Aorta (tissue), 5 donors: ENCODE measurements at regions of chr6 and their contacts with region 1.

Region 1: GRCh38 chr6:71420693-71421328 is 132.2 kb downstream of the OGFRL1 start:
- DNase-seq: peak; percentile 97 to 98
- ATAC-seq: peak; percentile 99
- H3K4me3 ChIP-seq: peak overlapping the region; percentile 91
- H3K27ac ChIP-seq: peak overlapping the region; percentile 73 to 87
- H3K4me1 ChIP-seq: peaks cover 3 to 11% of the 10 kb centered on the region in 2 donors
- H3K27me3 ChIP-seq: no peaks in the 10 kb centered on the region

Region 2: DNA sequence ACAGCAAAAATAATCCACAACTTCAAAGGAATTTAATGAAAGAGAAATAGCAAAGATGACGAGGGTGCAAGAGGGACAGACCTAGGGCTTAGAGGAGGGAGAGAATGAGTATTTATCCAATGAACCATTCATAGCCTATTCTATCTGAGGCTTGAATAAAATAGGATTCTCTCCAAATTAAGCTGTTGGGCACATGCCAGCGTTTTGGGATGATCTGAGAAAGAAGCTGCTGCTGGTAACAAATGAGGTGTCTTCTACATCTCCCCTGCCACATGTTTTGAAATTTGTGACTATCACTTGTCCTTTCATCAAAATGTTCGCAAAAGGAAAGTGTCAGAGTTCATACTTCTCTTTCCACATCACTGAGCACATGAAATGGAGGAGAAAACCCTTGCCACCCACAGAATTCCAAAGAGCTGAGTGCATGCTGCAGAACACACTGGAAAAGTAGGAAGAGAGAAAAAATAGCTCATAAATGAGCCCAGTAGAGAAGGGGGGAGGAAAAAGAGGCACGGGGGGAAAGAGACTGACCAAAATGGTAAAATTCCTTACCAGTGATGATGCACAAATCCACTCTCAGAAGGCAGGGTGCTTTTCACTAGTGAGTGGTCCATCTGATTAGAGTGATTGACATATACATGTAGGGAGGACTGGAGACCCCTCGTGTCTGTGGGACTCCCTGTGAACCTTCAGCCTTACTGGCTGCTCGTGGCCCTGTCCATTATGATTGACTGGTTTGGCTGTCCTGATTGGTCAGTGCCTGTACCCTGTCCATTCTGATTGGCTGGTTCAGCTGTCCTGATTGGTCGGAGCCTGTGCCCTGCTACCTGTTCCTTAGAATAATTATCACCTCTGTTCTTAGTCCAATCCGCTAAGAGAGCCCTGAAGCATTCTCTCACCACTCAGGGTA is 48.3 kb after region 1 on chr6:
- intact Hi-C with region 1: loop called (anchors 2 to 5 kb)
- DNase-seq: no peak
- ATAC-seq: peak; percentile 77
- H3K4me3 ChIP-seq: peak overlapping the region; percentile 36 to 48
- H3K27ac ChIP-seq: peak overlapping the region; percentile 70 to 99
- H3K4me1 ChIP-seq: no peaks in the 10 kb centered on the region
- H3K27me3 ChIP-seq: no peaks in the 10 kb centered on the region

Region 3: GRCh38 chr6:71496018-71496721 is 75.4 kb after region 1 on chr6:
- intact Hi-C with region 1: loop called in 1 of 2 experiments (anchors 5 kb)
- DNase-seq: no peak
- ATAC-seq: peak; percentile 53
- H3K4me3 ChIP-seq: peak overlapping the region; percentile 43 to 87
- H3K27ac ChIP-seq: peak overlapping the region; percentile 81 to 86
- H3K4me1 ChIP-seq: peaks cover 0 to 1% of the 10 kb centered on the region in 2 donors
- H3K27me3 ChIP-seq: no peaks in the 10 kb centered on the region

Region 4: DNA sequence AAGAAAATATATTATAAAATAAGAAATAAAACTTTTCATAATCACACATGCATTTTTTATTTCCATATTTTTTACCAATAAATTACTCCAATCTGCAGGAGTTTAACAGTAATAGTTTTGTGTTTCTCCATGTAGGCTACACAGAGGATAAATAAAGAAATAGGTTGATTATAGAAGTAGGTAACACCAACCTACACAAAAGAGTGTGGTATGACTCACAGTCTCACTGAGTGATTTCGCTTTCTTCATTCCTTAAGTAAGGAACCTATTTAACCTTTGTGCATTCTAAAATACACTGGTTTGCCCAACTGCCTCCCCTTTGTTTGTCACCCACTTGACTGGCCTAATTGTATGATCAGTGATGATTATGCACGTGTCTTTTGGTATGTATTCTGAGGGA is 221.3 kb after region 1 on chr6:
- intact Hi-C with region 1: no loop called
- DNase-seq: no peak
- ATAC-seq: no peak
- H3K4me3 ChIP-seq: no peak overlapping the region
- H3K27ac ChIP-seq: no peak overlapping the region
- H3K4me1 ChIP-seq: no peaks in the 10 kb centered on the region
- H3K27me3 ChIP-seq: no peaks in the 10 kb centered on the region

Region 5: GRCh38 chr6:72022830-72023229 is 602.0 kb after region 1 on chr6:
- intact Hi-C with region 1: no loop called
- DNase-seq: no peak
- ATAC-seq: no peak
- H3K4me3 ChIP-seq: no peak overlapping the region
- H3K27ac ChIP-seq: no peak overlapping the region
- H3K4me1 ChIP-seq: peaks cover 0 to 1% of the 10 kb centered on the region in 2 donors
- H3K27me3 ChIP-seq: no peaks in the 10 kb centered on the region